Gastrocnemius medialis (tissue), 4 donors: ENCODE measurements at regions of chr19 and their contacts with region 1.

Region 1: DNA sequence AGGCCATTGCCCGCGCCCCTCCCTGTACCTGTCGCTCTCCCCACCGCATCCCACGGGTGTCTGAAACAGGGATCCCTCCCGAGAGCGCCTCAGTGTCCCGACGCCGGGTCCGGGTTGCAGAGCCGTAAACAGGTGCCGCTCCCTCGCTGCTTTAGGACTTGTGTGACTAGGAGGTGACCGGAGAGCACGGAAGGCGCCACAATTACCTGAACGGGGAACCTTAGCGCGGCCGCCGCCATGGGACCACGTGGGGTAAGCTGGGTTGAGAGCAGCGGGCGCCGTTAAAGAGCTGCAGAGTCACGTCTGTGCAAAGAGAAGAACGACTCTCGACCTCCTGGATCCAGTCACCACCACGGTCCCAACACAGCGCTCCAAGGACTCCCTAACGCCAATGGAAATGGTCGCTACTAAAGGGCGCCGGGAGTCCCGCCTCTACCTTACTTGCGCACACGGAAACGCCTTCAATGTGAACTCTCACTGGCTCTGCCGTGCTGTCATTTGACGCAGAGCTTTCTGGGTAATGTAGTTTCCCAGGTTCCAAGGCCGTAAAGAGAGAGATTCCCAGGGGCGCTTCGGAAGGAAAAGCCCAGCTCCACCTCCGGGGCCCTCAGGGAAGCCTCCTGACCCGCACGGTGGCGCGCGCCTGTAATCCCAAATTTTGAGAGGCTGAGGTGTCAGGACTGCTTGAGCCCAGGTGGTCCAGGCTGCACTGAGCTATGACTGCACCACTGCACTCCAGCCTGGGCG is at the start of gene ZNF552:
- DNase-seq: peak; percentile 78 to 87
- ATAC-seq: peak; percentile 96 to 97
- H3K4me3 ChIP-seq: peak within 1 kb of the TSS; percentile 66 to 89 (median 75)
- H3K27ac ChIP-seq: peak within 1 kb of the TSS; percentile 75 to 90 (median 84)
- H3K4me1 ChIP-seq: peaks cover 20 to 24% of the 10 kb centered on the region in 2 donors
- H3K27me3 ChIP-seq: no peaks in the 10 kb centered on the region
- CTCF ChIP-seq: no peak
- POLR2A ChIP-seq: peak; percentile 70 to 80
- total RNA-seq, gene ZNF552: 1.2 to 2.3 (median 1.8) TPM

Region 2: DNA sequence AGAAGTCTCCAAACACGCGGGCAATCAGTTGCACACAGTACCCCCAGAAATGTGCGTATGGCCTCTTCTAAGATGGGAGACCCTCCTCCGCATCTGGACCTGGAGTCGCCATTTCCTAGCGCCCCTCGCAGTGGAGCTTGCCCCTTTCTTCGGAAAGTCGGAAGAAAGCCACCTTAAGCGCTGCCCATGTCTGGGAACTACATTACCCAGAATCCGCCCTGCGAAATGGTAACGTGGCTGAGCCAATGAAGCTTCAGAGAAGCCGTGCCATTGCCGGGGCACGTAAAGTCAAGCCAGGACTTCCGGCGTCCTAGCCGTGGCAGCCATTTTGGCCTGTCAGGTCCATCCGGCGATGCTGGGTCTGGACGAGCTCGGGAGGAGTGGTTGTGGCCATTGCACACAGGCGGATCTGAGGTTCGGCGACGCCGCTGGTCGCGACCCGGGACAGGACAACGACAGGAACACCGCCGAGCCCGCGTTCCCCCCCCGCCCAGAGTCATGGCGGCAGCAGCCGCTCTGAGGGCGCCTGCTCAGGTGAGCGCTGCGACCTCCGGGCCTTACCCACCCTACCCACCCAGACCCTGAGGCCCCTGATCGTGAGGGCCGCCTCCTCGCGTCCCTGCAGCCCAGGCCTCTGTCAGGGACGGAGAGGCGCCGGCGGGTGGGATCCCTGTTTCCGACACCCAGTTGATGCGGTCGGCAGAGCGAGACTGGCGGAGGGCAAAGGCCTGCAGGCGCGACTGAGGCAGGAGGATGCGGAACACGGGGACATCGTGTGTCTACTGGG is 45.1 kb before region 1 on chr19 and contains the start of gene ZNF586:
- in situ Hi-C with region 1: no loop called
- intact Hi-C with region 1: loop called (anchors 1 kb)
- DNase-seq: peak; percentile 89 to 91
- ATAC-seq: peak; percentile 96 to 97
- H3K4me3 ChIP-seq: peak within 1 kb of the TSS; percentile 87 to 100 (median 93)
- H3K27ac ChIP-seq: peak within 1 kb of the TSS; percentile 91 to 94 (median 92)
- H3K4me1 ChIP-seq: peaks cover 17 to 36% of the 10 kb centered on the region in 2 donors
- H3K27me3 ChIP-seq: no peaks in the 10 kb centered on the region
- CTCF ChIP-seq: no peak
- POLR2A ChIP-seq: peak; percentile 72 to 76
- total RNA-seq, gene ZNF586: 7.6 to 13.3 (median 9.2) TPM

Region 3: GRCh38 chr19:57803594-57804325 is 10.9 kb before region 1 on chr19:
- in situ Hi-C with region 1: no loop called
- intact Hi-C with region 1: loop called (anchors 1 kb)
- DNase-seq: no peak
- ATAC-seq: peak; percentile 42 to 54
- H3K4me3 ChIP-seq: peak overlapping the region; percentile 44 to 65 (median 52)
- H3K27ac ChIP-seq: peak overlapping the region; percentile 50 to 77 (median 62)
- H3K4me1 ChIP-seq: peaks cover 9 to 29% of the 10 kb centered on the region in 2 donors
- H3K27me3 ChIP-seq: no peaks in the 10 kb centered on the region
- CTCF ChIP-seq: no peak
- POLR2A ChIP-seq: no peak